ENCODE measurements at regions of chr1 and their contacts with region 1.

Region 1: DNA sequence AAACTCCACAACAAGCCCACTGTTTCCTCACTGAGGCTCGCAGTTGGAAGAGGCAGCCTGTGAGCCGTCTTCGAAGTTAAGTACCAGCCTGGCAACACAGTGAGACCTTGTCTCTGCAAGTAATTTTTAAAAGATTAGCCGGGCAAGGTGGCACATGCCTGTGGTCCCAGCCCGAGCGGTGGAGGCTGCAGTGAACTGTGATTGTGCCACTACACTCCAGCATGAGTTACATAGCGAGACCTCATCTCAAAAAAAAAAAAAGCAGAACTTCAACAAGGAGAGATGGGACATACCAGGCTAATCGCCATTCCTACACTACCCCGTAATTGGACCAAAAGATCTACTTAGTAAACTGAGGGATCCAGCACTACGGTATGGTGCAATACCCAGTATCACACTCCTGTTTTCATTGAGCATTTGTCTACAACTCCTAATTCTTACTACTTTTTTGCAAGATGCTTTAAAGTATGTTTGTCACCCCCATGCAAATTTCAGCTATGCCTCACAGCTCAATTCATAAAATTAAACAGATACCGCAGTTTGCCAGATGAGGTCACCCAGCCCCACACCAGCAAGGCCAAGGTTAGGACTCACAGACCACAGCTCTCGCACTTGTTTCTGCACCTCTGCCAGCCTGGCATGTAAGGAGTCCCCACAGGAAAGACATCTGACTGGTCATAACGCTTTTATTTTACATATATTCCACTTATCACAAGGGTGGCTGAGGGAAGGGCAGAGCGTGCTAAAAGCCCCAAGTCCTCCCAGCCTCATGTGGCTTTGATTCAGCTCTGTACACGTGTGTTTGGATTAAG is 21.0 kb downstream of the SDE2 start:
- DNase-seq: peak in 3 of 9 experiments; percentile 27 to 45 (median 33)
- ATAC-seq: no peak
- H3K4me3 ChIP-seq: no peak overlapping the region
- H3K4me3 Mint-ChIP-seq: no peak overlapping the region
- H3K27ac ChIP-seq: no peak overlapping the region
- H3K27ac Mint-ChIP-seq: no peak overlapping the region
- H3K4me1 ChIP-seq: no peaks in the 10 kb centered on the region
- H3K4me1 Mint-ChIP-seq: peaks cover 4% of the 10 kb centered on the region
- H3K27me3 ChIP-seq: no peaks in the 10 kb centered on the region
- H3K27me3 Mint-ChIP-seq: no peaks in the 10 kb centered on the region
- CTCF ChIP-seq: no peak

Region 2: GRCh38 chr1:225318706-225319575 is 659.2 kb before region 1 on chr1:
- CTCF ChIA-PET with region 1: interaction called, 4 read pairs
- POLR2A ChIA-PET with region 1: no interaction called
- intact Hi-C with region 1: loop called (anchors 1 to 2 kb)
- DNase-seq: peak in 4 of 9 experiments; percentile 13 to 55 (median 32)
- ATAC-seq: peak; percentile 42
- H3K4me3 ChIP-seq: no peak overlapping the region
- H3K4me3 Mint-ChIP-seq: no peak overlapping the region
- H3K27ac ChIP-seq: no peak overlapping the region
- H3K27ac Mint-ChIP-seq: no peak overlapping the region
- H3K4me1 ChIP-seq: no peaks in the 10 kb centered on the region
- H3K4me1 Mint-ChIP-seq: no peaks in the 10 kb centered on the region
- H3K27me3 ChIP-seq: peaks cover 0 to 4% of the 10 kb centered on the region in 2 experiments
- H3K27me3 Mint-ChIP-seq: peaks cover 2% of the 10 kb centered on the region
- CTCF ChIP-seq: peak; percentile 69

Region 3: GRCh38 chr1:225554216-225554812 is 423.8 kb before region 1 on chr1:
- CTCF ChIA-PET with region 1: interaction called, 4 read pairs
- POLR2A ChIA-PET with region 1: no interaction called
- intact Hi-C with region 1: loop called in 1 of 2 experiments (anchors 2 kb)
- DNase-seq: peak in 2 of 9 experiments; percentile 26 to 43
- ATAC-seq: peak; percentile 40
- H3K4me3 ChIP-seq: no peak overlapping the region
- H3K4me3 Mint-ChIP-seq: no peak overlapping the region
- H3K27ac ChIP-seq: no peak overlapping the region
- H3K27ac Mint-ChIP-seq: no peak overlapping the region
- H3K4me1 ChIP-seq: no peaks in the 10 kb centered on the region
- H3K4me1 Mint-ChIP-seq: no peaks in the 10 kb centered on the region
- H3K27me3 ChIP-seq: no peaks in the 10 kb centered on the region
- H3K27me3 Mint-ChIP-seq: peaks cover 2% of the 10 kb centered on the region
- CTCF ChIP-seq: peak; percentile 63

Region 4: GRCh38 chr1:225881969-225882693 is 96.0 kb before region 1 on chr1 and contains the start of gene TMEM63A:
- CTCF ChIA-PET with region 1: interaction called, 3 read pairs
- POLR2A ChIA-PET with region 1: interaction called, 3 read pairs
- intact Hi-C with region 1: loop called (anchors 5 kb)
- DNase-seq: peak; percentile 78 to 95 (median 92)
- ATAC-seq: peak; percentile 72
- H3K4me3 ChIP-seq: peak within 1 kb of the TSS; percentile 85 to 100
- H3K4me3 Mint-ChIP-seq: peak within 1 kb of the TSS; percentile 94
- H3K27ac ChIP-seq: peak within 1 kb of the TSS; percentile 65 to 84
- H3K27ac Mint-ChIP-seq: peak within 1 kb of the TSS; percentile 97
- H3K4me1 ChIP-seq: peaks cover 42% of the 10 kb centered on the region
- H3K4me1 Mint-ChIP-seq: peaks cover 52% of the 10 kb centered on the region
- H3K27me3 ChIP-seq: no peaks in the 10 kb centered on the region
- H3K27me3 Mint-ChIP-seq: no peaks in the 10 kb centered on the region
- CTCF ChIP-seq: no peak
- total RNA-seq, gene TMEM63A: 132 to 144 TPM

Region 5: DNA sequence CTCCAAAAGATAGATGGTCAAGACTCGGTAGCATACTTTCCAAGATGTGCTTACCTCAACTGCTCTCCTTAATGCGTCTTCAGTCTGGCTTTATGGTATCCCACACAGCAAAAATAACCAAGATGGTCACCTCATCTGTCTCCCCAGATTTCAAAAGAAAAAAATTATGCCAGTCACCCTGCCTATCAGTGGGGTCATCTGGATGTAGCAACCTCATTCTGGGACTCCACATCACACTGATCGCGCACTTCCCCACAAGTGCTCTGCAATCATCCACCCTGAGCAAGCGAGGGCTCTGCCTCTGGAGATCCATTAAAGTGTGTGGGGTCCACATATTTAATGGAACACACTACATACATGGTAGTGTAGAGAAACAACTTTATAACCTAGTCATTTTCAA is 165.9 kb after region 1 on chr1:
- CTCF ChIA-PET with region 1: no interaction called
- POLR2A ChIA-PET with region 1: no interaction called
- intact Hi-C with region 1: no loop called
- DNase-seq: peak in 1 of 9 experiments; percentile 7
- ATAC-seq: no peak
- H3K4me3 ChIP-seq: no peak overlapping the region
- H3K4me3 Mint-ChIP-seq: no peak overlapping the region
- H3K27ac ChIP-seq: no peak overlapping the region
- H3K27ac Mint-ChIP-seq: no peak overlapping the region
- H3K4me1 ChIP-seq: no peaks in the 10 kb centered on the region
- H3K4me1 Mint-ChIP-seq: no peaks in the 10 kb centered on the region
- H3K27me3 ChIP-seq: no peaks in the 10 kb centered on the region
- H3K27me3 Mint-ChIP-seq: no peaks in the 10 kb centered on the region
- CTCF ChIP-seq: no peak

Region 6: GRCh38 chr1:226195144-226195543 is 217.0 kb after region 1 on chr1:
- CTCF ChIA-PET with region 1: no interaction called
- POLR2A ChIA-PET with region 1: no interaction called
- intact Hi-C with region 1: loop called in 1 of 2 experiments (anchors 5 kb)
- DNase-seq: no peak
- ATAC-seq: no peak
- H3K4me3 ChIP-seq: no peak overlapping the region
- H3K4me3 Mint-ChIP-seq: no peak overlapping the region
- H3K27ac ChIP-seq: no peak overlapping the region
- H3K27ac Mint-ChIP-seq: no peak overlapping the region
- H3K4me1 ChIP-seq: no peaks in the 10 kb centered on the region
- H3K4me1 Mint-ChIP-seq: no peaks in the 10 kb centered on the region
- H3K27me3 ChIP-seq: no peaks in the 10 kb centered on the region
- H3K27me3 Mint-ChIP-seq: peaks cover 7% of the 10 kb centered on the region
- CTCF ChIP-seq: no peak

Measured in CD8-positive, alpha-beta T cell (primary cell).